ENCODE measurements at regions of chr1 and their contacts with region 1.

Region 1: GRCh38 chr1:153990468-153991150 is at the start of gene RPS27:
- DNase-seq: peak; percentile 81 to 93
- H3K4me3 ChIP-seq: peak within 1 kb of the TSS; percentile 92
- H3K27ac ChIP-seq: peak within 1 kb of the TSS; percentile 77
- H3K4me1 ChIP-seq: peaks cover 14% of the 10 kb centered on the region
- H3K27me3 ChIP-seq: no peaks in the 10 kb centered on the region
- CTCF ChIP-seq: no peak
- total RNA-seq, gene RPS27: 898 and 1,409 TPM in 2 replicates

Region 2: GRCh38 chr1:153253693-153254092 is 736.9 kb before region 1 on chr1:
- CTCF ChIA-PET with region 1: no interaction called
- POLR2A ChIA-PET with region 1: no interaction called
- intact Hi-C with region 1: no loop called
- DNase-seq: no peak
- H3K4me3 ChIP-seq: no peak overlapping the region
- H3K27ac ChIP-seq: no peak overlapping the region
- H3K4me1 ChIP-seq: no peaks in the 10 kb centered on the region
- H3K27me3 ChIP-seq: 0 out of 2 replicates have a peak, but pooled peaks cover 4% of the 10 kb centered on the region
- CTCF ChIP-seq: no peak

Region 3: DNA sequence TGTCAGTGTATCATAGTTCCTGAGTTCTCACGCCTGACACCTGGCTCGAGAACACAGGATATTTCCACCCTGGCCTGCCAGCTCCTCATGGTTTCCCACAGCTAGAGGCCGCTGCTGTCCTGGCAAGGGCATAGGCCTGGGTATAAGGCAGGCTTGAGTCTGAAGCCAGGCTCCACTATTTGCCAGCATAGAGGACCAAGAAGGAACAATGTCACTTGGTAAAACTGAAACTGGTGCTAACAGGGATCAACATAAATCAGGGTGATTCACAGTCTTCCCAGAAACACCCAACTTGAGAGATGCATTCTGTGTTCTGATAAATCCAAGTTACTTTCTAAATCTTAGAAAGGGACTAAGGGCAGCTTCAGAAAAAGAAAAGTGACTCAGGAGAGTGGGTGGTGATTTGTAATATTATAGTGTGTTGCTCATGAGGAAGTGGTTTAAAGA is 418.0 kb before region 1 on chr1:
- CTCF ChIA-PET with region 1: no interaction called
- POLR2A ChIA-PET with region 1: interaction called, 3 read pairs
- intact Hi-C with region 1: loop called (anchors 5 kb)
- DNase-seq: peak; percentile 81 to 84
- H3K4me3 ChIP-seq: no peak overlapping the region
- H3K27ac ChIP-seq: peak overlapping the region; percentile 75
- H3K4me1 ChIP-seq: peaks cover 29% of the 10 kb centered on the region
- H3K27me3 ChIP-seq: no peaks in the 10 kb centered on the region
- CTCF ChIP-seq: peak; percentile 91

Region 4: DNA sequence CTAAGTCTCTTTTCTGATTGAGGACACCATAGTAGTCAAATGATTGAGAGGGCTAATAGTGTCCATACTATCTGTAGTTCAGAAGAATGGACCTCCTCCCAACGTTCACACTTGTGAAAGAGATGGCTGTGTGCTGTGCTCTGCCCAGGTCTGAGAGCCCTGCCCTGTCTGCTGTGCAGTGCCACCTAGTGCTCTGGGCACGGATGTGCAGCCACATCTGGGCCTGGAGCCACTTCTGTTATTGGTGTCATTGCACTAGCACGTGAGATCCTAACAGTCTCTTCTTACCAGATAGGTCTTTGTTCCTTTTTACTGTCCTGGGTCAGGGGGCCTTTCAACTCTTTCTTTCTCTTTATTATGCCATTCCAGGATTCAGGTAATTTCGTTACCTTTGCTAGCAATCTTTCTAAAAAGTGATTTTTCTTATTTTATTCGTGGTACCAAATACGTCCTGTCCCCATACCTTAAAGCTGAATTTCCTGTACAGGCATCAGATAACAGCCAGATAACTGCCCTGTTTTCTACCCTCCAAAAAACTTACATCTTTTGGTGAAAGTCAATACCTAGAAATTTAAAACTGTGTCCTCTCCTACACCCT is 241.1 kb before region 1 on chr1:
- CTCF ChIA-PET with region 1: no interaction called
- POLR2A ChIA-PET with region 1: no interaction called
- intact Hi-C with region 1: loop called (anchors 1 kb)
- DNase-seq: peak; percentile 66 to 73
- H3K4me3 ChIP-seq: no peak overlapping the region
- H3K27ac ChIP-seq: no peak overlapping the region
- H3K4me1 ChIP-seq: no peaks in the 10 kb centered on the region
- H3K27me3 ChIP-seq: no peaks in the 10 kb centered on the region
- CTCF ChIP-seq: peak; percentile 94

Region 5: DNA sequence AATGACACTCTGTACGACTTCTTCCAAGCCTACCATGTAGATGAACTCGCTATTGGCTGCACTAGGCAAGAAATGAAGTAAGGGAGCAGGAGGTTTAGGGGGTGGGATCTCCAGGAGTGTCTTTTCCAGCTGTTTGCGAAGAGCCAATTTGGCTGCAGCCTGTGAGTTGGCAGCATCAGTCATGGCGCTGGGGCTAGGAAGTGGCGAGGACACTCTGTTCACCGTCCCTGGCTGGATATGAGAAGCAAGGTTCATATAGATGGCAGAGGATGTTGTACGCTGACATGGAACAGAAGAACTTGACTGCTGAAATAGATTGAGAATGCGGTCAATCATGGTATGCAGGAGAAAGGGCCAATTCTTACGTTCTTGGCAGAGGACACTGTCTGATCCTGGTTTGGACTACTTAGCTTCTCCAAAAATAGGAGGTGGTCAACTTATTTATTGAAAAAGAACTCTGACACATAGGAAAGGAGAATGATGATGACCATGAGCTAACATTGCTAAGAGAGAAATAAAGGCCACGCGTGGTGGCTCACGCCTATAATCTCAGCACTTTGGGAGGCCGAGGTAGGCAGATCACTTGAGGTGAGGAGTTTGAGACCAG is 174.2 kb before region 1 on chr1:
- CTCF ChIA-PET with region 1: no interaction called
- POLR2A ChIA-PET with region 1: no interaction called
- intact Hi-C with region 1: loop called (anchors 2 kb)
- DNase-seq: no peak
- H3K4me3 ChIP-seq: no peak overlapping the region
- H3K27ac ChIP-seq: no peak overlapping the region
- H3K4me1 ChIP-seq: no peaks in the 10 kb centered on the region
- H3K27me3 ChIP-seq: no peaks in the 10 kb centered on the region
- CTCF ChIP-seq: no peak

Region 6: DNA sequence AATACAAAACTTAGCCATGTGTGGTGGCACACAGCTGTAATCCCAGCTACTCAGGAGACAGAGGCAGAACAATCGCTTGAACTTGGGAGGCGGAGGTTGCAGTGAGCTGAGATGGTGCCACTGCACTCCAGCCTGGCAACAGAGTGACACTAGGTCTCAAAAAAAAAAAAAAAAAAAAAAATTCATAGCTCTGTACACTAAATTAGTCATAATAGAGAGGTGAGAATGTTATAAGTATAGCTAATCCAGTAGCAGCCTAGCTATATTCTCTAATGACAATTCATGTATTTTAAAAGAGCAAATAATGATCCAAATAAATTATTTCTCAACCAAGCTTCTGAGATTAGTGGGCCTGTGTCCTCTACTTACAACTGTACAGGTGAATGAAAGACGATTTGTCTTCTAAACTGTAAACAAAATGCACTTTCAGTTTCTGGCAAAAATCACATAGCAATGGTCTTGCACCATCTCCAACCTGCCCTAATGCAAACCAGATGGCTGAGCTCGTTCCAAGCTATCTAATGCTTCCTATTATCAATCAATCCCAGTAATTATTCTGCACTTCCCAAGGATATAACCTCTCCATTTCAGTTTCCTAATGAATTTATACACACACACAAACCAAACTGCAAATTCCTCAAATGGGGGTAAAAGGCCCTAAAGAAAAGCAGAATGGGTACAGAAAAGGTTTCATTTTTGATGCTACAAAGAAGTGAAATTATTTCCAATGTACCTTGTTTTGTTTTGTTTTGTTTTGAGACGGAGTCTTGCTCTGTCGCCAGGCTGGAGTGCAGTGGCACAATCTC is 124.4 kb before region 1 on chr1:
- CTCF ChIA-PET with region 1: no interaction called
- POLR2A ChIA-PET with region 1: no interaction called
- intact Hi-C with region 1: no loop called
- DNase-seq: no peak
- H3K4me3 ChIP-seq: no peak overlapping the region
- H3K27ac ChIP-seq: no peak overlapping the region
- H3K4me1 ChIP-seq: no peaks in the 10 kb centered on the region
- H3K27me3 ChIP-seq: no peaks in the 10 kb centered on the region
- CTCF ChIP-seq: no peak

Region 7: GRCh38 chr1:153967082-153968000 is 23.3 kb before region 1 on chr1 and contains the start of gene CREB3L4:
- CTCF ChIA-PET with region 1: interaction called, 4 read pairs
- POLR2A ChIA-PET with region 1: interaction called, 10 read pairs
- intact Hi-C with region 1: loop called (anchors 1 kb)
- DNase-seq: peak; percentile 92 to 93
- H3K4me3 ChIP-seq: peak within 1 kb of the TSS; percentile 90
- H3K27ac ChIP-seq: peak within 1 kb of the TSS; percentile 80
- H3K4me1 ChIP-seq: peaks cover 37% of the 10 kb centered on the region
- H3K27me3 ChIP-seq: no peaks in the 10 kb centered on the region
- CTCF ChIP-seq: peak; percentile 58; the same call in 1 of the 2 replicates
- total RNA-seq, gene CREB3L4: 23.4 and 25.9 TPM in 2 replicates

Region 8: GRCh38 chr1:154145986-154146385 is 155.4 kb after region 1 on chr1:
- CTCF ChIA-PET with region 1: no interaction called
- POLR2A ChIA-PET with region 1: interaction called, 12 read pairs
- intact Hi-C with region 1: no loop called
- DNase-seq: no peak
- H3K4me3 ChIP-seq: no peak overlapping the region
- H3K27ac ChIP-seq: no peak overlapping the region
- H3K4me1 ChIP-seq: peaks cover 6% of the 10 kb centered on the region; the same call in 1 of the 2 replicates
- H3K27me3 ChIP-seq: no peaks in the 10 kb centered on the region
- CTCF ChIP-seq: peak; percentile 67